Dorsolateral prefrontal cortex (tissue), 120 donors: ENCODE measurements at regions of chr3 and their contacts with region 1.

Region 1: GRCh38 chr3:177126015-177126773 is 71.1 kb downstream of the TBL1XR1 start:
- DNase-seq: no peak
- H3K4me3 ChIP-seq: peak overlapping the region in 1 of 59 donors; percentile 10
- H3K27ac ChIP-seq: peak overlapping the region in 3 of 59 donors; percentile 2 to 10 (median 5)
- H3K27me3 ChIP-seq: no peaks in the 10 kb centered on the region
- CTCF ChIP-seq: no peak

Region 2: DNA sequence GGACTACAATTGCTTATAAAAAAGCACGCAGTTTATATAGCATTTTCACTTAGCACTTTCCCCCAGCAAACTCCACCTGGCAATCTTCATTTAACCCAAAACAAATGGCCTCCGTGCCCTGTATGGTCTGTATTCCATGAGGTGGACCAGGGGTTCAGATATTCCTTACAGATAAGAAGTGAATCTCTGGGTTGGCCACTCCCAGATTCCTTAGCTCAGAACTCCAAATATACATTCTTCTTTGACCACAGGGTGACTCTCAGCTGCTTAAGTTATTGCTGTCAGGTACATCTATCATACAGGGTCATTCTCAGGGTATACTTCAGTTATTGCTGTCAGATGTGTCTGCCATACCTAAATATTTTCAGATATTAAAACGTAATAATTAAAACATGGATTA is 158.7 kb before region 1 on chr3:
- intact Hi-C with region 1: no loop called
- DNase-seq: no peak
- H3K4me3 ChIP-seq: no peak overlapping the region
- H3K27ac ChIP-seq: no peak overlapping the region
- H3K27me3 ChIP-seq: no peaks in the 10 kb centered on the region
- CTCF ChIP-seq: no peak

Region 3: DNA sequence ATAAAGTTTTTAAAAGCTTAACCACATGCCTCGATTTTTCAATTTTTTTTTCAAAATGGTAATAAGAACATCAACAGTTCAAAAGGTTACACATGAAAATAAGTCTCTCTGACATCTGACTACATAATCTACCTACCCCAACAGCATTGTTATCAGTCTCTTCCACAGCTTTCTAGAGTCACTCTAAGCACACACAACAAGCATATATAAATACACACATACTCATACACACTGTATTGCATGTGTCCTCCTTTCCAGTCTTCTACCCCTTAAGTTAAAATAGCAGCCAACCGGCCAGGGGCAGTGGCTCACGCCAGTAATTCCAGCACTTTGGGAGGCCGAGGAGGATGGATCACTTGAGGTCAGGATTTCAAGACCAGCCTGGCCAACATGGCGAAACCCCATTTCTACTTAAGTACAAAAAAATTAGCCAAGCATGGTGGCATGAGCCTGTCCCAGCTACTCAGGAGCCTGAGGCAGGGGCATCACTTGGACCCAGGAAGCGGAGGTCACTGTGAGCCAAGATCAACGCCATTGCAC is 58.9 kb after region 1 on chr3:
- intact Hi-C with region 1: loop called in 1 of 2 experiments (anchors 10 kb)
- DNase-seq: no peak
- H3K4me3 ChIP-seq: no peak overlapping the region
- H3K27ac ChIP-seq: no peak overlapping the region
- H3K27me3 ChIP-seq: no peaks in the 10 kb centered on the region
- CTCF ChIP-seq: no peak